Heart right ventricle (tissue), 16 donors: ENCODE measurements at regions of chr12 and their contacts with region 1.

Region 1: GRCh38 chr12:44227616-44228015 is 391.7 kb downstream of the TMEM117 start:
- DNase-seq: no peak
- ATAC-seq: peak in 1 of 8 donors; percentile 27
- H3K4me3 ChIP-seq: no peak overlapping the region
- H3K27ac ChIP-seq: no peak overlapping the region
- H3K4me1 ChIP-seq: peaks cover 4 to 37% (median 17%) of the 10 kb centered on the region in 9 donors
- H3K27me3 ChIP-seq: no peaks in the 10 kb centered on the region
- CTCF ChIP-seq: no peak

Region 2: DNA sequence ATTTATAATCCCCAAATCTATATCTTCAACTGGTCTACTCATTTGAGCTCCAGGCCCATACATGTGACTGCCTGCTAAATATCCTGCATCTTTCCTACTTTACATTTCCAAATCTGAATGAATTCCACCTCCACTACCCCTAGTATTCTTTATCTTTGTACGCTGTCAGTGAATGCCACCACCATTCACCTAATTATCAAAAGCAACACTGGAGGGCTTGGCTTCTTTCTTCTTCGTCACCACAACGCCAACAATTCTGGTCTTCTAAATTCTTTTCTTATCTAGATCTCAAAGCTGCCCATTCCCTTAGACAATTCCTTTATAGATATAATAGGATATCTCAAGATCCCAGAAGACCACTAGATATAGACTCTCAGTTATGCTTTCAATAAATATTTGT is 628.5 kb before region 1 on chr12:
- intact Hi-C with region 1: no loop called
- DNase-seq: no peak
- ATAC-seq: no peak
- H3K4me3 ChIP-seq: no peak overlapping the region
- H3K27ac ChIP-seq: no peak overlapping the region
- H3K4me1 ChIP-seq: no peaks in the 10 kb centered on the region
- H3K27me3 ChIP-seq: no peaks in the 10 kb centered on the region
- CTCF ChIP-seq: no peak

Region 3: GRCh38 chr12:44184499-44185206 is 43.0 kb before region 1 on chr12:
- intact Hi-C with region 1: loop called in 1 of 10 experiments (anchors 5 kb)
- DNase-seq: no peak
- ATAC-seq: no peak
- H3K4me3 ChIP-seq: no peak overlapping the region
- H3K27ac ChIP-seq: no peak overlapping the region
- H3K4me1 ChIP-seq: no peaks in the 10 kb centered on the region
- H3K27me3 ChIP-seq: no peaks in the 10 kb centered on the region
- CTCF ChIP-seq: no peak

Region 4: DNA sequence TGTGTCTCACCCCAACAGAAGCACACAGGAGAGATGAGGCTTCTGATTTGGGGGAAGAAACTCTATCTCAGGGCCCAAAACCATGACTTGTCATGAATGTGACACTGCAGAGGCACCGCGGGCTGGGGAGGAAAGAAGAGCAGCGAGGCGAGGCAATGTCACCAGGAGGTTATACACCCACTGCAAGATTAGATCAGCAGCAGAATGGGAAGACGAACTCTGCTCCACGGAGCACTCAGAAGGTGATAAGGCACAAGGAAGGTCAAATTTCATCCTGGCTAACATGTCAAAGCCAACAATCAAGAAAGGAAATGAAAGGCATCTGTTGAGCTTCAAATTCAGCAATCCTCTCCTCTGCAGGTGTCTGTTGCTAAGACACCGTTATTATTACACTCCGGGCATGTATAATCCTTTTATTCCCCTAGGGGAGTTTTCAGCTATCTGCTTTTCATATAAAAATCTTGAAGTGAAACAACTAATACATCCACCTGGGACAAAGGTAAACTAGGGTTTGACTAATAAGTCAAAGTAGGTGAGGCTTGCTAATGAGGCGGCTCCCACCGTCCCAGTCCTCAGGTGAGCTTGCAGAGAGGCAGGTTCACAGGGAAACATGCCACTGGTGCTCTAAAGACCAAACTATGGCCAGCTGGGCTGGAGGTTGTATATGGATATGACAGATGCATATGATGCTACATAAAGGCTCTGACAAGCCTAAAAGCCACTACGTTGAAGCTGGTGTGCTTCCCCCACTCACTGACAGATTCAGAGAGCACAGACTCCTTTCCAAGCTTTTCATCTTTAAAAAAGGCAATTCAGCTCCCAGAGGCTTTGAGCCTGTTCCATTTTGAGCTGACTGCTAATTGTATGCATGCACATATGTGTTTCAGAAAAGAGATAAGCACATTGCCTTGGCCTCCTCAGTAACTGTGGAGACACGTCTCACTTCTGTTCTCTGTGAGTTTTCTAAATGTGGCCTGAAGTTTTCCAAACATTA is 427.3 kb after region 1 on chr12:
- intact Hi-C with region 1: no loop called
- DNase-seq: no peak
- ATAC-seq: no peak
- H3K4me3 ChIP-seq: no peak overlapping the region
- H3K27ac ChIP-seq: no peak overlapping the region
- H3K4me1 ChIP-seq: no peaks in the 10 kb centered on the region
- H3K27me3 ChIP-seq: peaks cover 0 to 8% (median 0%) of the 10 kb centered on the region in 7 donors
- CTCF ChIP-seq: no peak